ENCODE measurements at regions of chr22 and their contacts with region 1.

Region 1: DNA sequence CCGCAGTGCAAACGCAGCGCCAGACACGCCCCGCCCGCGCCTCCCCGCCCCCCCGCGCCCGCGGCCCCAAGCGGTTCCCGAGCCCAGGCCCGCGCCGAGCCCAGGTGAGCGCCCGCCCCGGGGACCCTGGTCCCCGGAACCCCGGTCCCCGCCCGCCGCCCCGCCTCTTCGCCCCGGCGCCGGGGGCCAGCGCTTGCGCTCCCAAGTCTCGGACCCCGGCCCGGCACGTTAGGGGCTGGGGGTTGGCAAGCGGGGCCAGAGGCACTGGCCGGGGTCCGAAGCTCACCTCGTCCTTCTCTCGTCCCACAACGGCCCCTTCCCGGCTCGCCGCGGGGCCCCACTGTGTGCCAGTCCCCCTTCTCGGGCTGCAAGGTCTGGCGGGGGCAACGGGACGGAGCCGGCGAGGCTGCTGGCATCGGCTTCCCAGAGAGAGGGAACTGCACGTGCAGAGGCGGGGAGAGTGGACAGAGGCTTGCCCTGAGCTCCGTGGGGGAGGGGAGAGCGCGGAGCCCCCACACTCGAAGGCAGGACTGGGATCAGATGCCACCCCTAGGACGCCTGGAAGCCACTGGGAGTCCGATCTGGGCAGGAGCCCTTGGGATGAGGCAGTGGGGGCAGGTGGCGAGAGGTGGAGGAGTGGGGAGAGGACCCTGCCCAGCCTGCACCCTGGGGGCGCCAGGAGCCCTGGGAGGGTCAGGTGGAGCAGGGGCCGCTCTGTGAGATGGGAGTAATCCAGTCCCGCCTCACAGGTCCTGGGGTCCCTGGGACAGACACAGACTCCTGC is 1.8 kb upstream of the AIFM3 start:
- DNase-seq: peak; percentile 55
- H3K4me3 ChIP-seq: peak overlapping the region; percentile 50
- H3K27ac ChIP-seq: peak overlapping the region; percentile 87
- H3K4me1 ChIP-seq: peaks cover 3% of the 10 kb centered on the region
- H3K27me3 ChIP-seq: no peaks in the 10 kb centered on the region
- CTCF ChIP-seq: no peak

Region 2: DNA sequence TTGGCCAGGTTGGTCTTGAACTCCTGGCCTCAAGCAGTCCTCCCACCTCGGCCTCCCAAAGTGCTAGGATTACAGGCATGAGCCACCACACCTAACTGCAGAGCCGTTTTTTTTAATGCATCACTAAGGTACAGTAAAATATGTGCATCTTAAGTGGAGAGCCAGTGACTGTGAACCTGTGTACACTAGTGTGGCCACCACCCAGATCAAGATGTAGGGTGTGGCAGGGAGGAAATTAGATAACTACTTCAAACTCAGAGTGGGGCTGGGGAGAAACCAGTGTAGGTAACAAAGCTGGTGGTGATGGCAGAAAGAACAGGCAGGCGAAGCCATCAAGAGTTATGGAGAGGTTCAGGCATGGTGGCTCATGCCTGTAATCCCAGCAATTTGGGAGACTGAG is 92.1 kb before region 1 on chr22:
- intact Hi-C with region 1: loop called (anchors 10 kb)
- DNase-seq: no peak
- H3K4me3 ChIP-seq: no peak overlapping the region
- H3K27ac ChIP-seq: no peak overlapping the region
- H3K4me1 ChIP-seq: peaks cover under 1% of the 10 kb centered on the region
- H3K27me3 ChIP-seq: no peaks in the 10 kb centered on the region
- CTCF ChIP-seq: no peak

Region 3: GRCh38 chr22:20899827-20900423 is 65.4 kb before region 1 on chr22:
- intact Hi-C with region 1: no loop called
- DNase-seq: no peak
- H3K4me3 ChIP-seq: no peak overlapping the region
- H3K27ac ChIP-seq: no peak overlapping the region
- H3K4me1 ChIP-seq: no peaks in the 10 kb centered on the region
- H3K27me3 ChIP-seq: no peaks in the 10 kb centered on the region
- CTCF ChIP-seq: no peak

Measured in colonic mucosa (tissue), 4 donors.